Prostate gland (tissue), 2 donors: ENCODE measurements at regions of chr22 and their contacts with region 1.

Region 1: GRCh38 chr22:36277482-36278291 is 24.8 kb downstream of the APOL1 start:
- DNase-seq: peak; percentile 50
- H3K4me3 ChIP-seq: no peak overlapping the region
- H3K27ac ChIP-seq: no peak overlapping the region
- H3K4me1 ChIP-seq: peaks cover 3% of the 10 kb centered on the region
- H3K27me3 ChIP-seq: no peaks in the 10 kb centered on the region
- CTCF ChIP-seq: peak; percentile 41 to 75 (median 60)
- POLR2A ChIP-seq: no peak

Region 2: GRCh38 chr22:36156515-36157419 is 120.9 kb before region 1 on chr22:
- intact Hi-C with region 1: loop called (anchors 5 kb)
- DNase-seq: peak; percentile 66
- H3K4me3 ChIP-seq: peak overlapping the region; percentile 21 to 25
- H3K27ac ChIP-seq: peak overlapping the region; percentile 86 to 91
- H3K4me1 ChIP-seq: peaks cover 5% of the 10 kb centered on the region
- H3K27me3 ChIP-seq: no peaks in the 10 kb centered on the region
- CTCF ChIP-seq: no peak
- POLR2A ChIP-seq: no peak

Region 3: DNA sequence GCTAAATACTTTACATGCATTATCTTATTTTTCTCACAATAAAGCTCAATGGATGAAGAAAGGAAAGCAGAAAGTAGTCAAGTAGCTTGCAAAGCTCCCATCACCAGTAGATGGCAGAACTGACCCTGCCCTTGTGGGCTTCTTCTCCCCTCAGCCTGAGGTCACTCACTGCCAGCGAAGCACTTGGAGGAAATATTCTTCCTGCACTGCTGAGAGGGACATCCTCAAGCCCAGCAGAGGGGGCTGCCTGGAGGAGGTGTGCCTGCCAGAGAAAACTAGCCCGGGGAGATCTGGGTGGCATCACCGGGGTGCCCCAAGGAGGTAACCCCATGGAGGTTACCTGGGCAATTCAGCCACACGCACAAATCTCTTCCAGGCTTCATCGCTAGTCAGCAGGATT is 82.7 kb before region 1 on chr22:
- intact Hi-C with region 1: loop called (anchors 5 kb)
- DNase-seq: peak; percentile 49
- H3K4me3 ChIP-seq: no peak overlapping the region
- H3K27ac ChIP-seq: no peak overlapping the region
- H3K4me1 ChIP-seq: no peaks in the 10 kb centered on the region
- H3K27me3 ChIP-seq: no peaks in the 10 kb centered on the region
- CTCF ChIP-seq: peak; percentile 46 to 84 (median 82)
- POLR2A ChIP-seq: no peak

Region 4: GRCh38 chr22:36239401-36240171 is 38.1 kb before region 1 on chr22 and contains the start of gene APOL2:
- intact Hi-C with region 1: loop called (anchors 5 kb)
- DNase-seq: peak; percentile 92
- H3K4me3 ChIP-seq: peak within 1 kb of the TSS; percentile 44 to 60
- H3K27ac ChIP-seq: peak within 1 kb of the TSS; percentile 89 to 95
- H3K4me1 ChIP-seq: peaks cover 17% of the 10 kb centered on the region
- H3K27me3 ChIP-seq: no peaks in the 10 kb centered on the region
- CTCF ChIP-seq: peak; percentile 60 to 87 (median 79)
- POLR2A ChIP-seq: peak; percentile 88
- total RNA-seq, gene APOL2: 35.2 to 64.1 TPM